B cell (primary cell): ENCODE measurements at regions of chr4 and their contacts with region 1.

Region 1: DNA sequence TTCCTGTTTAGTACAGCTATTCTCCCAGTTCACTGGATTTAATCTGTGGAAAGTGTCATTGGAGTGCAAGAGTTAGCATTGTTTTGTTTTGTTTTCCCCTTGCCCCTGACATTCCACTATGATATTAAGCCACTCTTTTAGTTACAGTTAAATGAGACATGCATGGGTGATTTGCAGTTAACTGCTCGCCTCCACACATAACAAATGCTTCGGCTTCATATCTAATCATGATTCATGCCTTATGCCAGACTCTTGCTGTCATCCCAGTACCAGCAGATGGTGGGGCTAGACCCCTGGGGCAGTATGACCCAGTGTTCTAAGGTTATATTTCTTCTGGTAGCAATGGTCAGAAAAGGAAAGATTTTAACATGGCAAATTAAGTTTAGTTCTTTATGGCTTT is 80.1 kb downstream of the RAP1GDS1 start:
- DNase-seq: no peak
- ATAC-seq: no peak
- H3K4me3 ChIP-seq: no peak overlapping the region
- H3K4me3 Mint-ChIP-seq: no peak overlapping the region
- H3K27ac ChIP-seq: no peak overlapping the region
- H3K27ac Mint-ChIP-seq: peak overlapping the region; percentile 62
- H3K4me1 ChIP-seq: peaks cover 4 to 6% of the 10 kb centered on the region in 2 donors
- H3K4me1 Mint-ChIP-seq: peaks cover 17% of the 10 kb centered on the region
- H3K27me3 ChIP-seq: no peaks in the 10 kb centered on the region
- H3K27me3 Mint-ChIP-seq: no peaks in the 10 kb centered on the region
- CTCF ChIP-seq: no peak

Region 2: DNA sequence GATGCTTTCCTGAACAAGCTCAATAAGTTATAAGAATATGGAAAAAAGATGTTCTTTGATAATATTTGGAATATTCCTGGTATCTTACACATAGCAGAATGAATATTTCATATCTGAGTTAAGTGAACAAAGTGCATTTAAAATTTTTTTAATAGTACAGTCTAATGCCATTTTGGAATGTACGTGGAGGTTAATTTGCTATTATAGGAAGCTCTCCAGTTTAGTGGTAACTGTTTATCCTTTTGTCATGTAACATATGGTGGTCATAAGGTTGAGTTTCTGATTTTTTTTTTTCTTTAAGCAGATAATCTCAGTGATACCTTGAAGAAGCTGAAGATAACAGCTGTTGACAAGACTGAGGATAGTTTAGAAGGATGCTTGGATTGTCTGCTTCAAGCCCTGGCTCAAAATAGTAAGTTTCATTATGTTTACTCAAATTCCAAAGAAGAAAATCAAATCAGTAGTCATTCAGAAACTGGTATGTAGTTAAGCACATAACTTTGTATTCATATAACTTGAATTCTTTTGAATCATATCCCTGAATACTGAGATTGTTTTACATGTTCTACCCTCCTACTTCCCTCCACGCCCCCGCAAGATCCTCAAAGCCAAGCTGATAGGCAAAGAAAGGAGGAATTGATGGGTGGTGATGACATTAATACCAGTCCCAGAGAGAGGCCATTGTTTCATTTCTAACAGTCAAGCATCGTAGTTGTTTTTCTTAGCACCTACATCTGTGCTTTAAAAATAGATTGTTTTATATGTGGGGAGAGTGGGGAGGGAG is 48.0 kb before region 1 on chr4:
- CTCF ChIA-PET with region 1: no interaction called
- POLR2A ChIA-PET with region 1: no interaction called
- intact Hi-C with region 1: loop called (anchors 10 kb)
- DNase-seq: no peak
- ATAC-seq: no peak
- H3K4me3 ChIP-seq: no peak overlapping the region
- H3K4me3 Mint-ChIP-seq: no peak overlapping the region
- H3K27ac ChIP-seq: no peak overlapping the region
- H3K27ac Mint-ChIP-seq: no peak overlapping the region
- H3K4me1 ChIP-seq: peaks cover 25 to 29% of the 10 kb centered on the region in 2 donors
- H3K4me1 Mint-ChIP-seq: peaks cover 60% of the 10 kb centered on the region
- H3K27me3 ChIP-seq: no peaks in the 10 kb centered on the region
- H3K27me3 Mint-ChIP-seq: no peaks in the 10 kb centered on the region
- CTCF ChIP-seq: no peak

Region 3: GRCh38 chr4:98383431-98384106 is 42.3 kb after region 1 on chr4:
- CTCF ChIA-PET with region 1: no interaction called
- POLR2A ChIA-PET with region 1: no interaction called
- intact Hi-C with region 1: loop called (anchors 5 kb)
- DNase-seq: peak; percentile 4
- ATAC-seq: no peak
- H3K4me3 ChIP-seq: no peak overlapping the region
- H3K4me3 Mint-ChIP-seq: no peak overlapping the region
- H3K27ac ChIP-seq: peak overlapping the region in 1 of 2 donors; percentile 37
- H3K27ac Mint-ChIP-seq: no peak overlapping the region
- H3K4me1 ChIP-seq: peaks cover 0 to 14% of the 10 kb centered on the region in 2 donors
- H3K4me1 Mint-ChIP-seq: peaks cover 18% of the 10 kb centered on the region
- H3K27me3 ChIP-seq: no peaks in the 10 kb centered on the region
- H3K27me3 Mint-ChIP-seq: no peaks in the 10 kb centered on the region
- CTCF ChIP-seq: no peak